Psoas muscle (tissue), 8 donors: ENCODE measurements at regions of chr19 and their contacts with region 1.

Region 1: GRCh38 chr19:2191456-2192310 is 27.9 kb downstream of the DOT1L start:
- DNase-seq: no peak
- ATAC-seq: no peak
- H3K4me3 ChIP-seq: no peak overlapping the region
- H3K27ac ChIP-seq: no peak overlapping the region
- H3K4me1 ChIP-seq: peaks cover 28% of the 10 kb centered on the region
- H3K27me3 ChIP-seq: no peaks in the 10 kb centered on the region
- CTCF ChIP-seq: no peak

Region 2: GRCh38 chr19:1935484-1936208 is 256.0 kb before region 1 on chr19:
- intact Hi-C with region 1: no loop called
- DNase-seq: peak; percentile 66 to 80
- ATAC-seq: peak; percentile 28 to 61 (median 36)
- H3K4me3 ChIP-seq: no peak overlapping the region
- H3K27ac ChIP-seq: peak overlapping the region; percentile 54
- H3K4me1 ChIP-seq: peaks cover 10% of the 10 kb centered on the region
- H3K27me3 ChIP-seq: no peaks in the 10 kb centered on the region
- CTCF ChIP-seq: no peak

Region 3: GRCh38 chr19:2123682-2124387 is 67.8 kb before region 1 on chr19:
- intact Hi-C with region 1: no loop called
- DNase-seq: peak in 1 of 2 donors; percentile 47
- ATAC-seq: no peak
- H3K4me3 ChIP-seq: no peak overlapping the region
- H3K27ac ChIP-seq: no peak overlapping the region
- H3K4me1 ChIP-seq: no peaks in the 10 kb centered on the region
- H3K27me3 ChIP-seq: no peaks in the 10 kb centered on the region
- CTCF ChIP-seq: no peak

Region 4: DNA sequence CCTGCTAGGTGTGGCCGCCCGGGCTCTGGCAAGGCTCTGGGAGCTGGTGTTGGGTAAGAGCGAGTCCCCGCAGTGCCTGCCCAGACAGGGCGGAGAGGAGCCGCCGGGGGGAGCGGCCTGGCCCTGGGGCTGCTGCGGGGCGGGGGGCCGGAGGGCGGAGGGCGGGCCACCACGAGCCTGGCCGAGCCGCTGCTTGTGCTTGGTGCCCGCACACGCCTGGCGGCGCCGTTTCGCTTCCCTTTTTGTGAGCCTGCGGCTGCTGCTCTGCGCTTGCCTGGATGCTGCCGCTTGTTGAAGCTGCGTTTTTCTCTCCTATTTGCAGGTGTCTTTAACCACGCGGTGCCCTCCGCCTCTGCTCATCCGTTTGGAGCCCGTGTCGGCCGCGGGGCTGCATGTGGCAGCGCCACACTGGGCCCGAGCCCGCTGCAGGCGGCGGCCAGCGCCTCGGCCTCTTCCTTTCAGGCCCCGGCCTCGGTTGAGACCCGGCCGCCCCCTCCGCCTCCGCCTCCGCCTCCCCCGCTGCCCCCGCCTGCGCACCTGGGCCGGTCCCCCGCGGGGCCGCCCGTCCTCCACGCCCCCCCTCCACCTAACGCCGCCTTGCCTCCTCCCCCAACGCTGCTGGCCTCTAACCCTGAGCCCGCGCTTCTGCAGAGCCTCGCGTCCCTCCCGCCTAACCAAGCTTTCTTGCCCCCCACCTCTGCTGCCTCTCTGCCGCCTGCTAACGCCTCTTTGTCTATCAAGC is 35.9 kb after region 1 on chr19:
- intact Hi-C with region 1: loop called in 1 of 2 experiments (anchors 5 kb)
- DNase-seq: no peak
- ATAC-seq: no peak
- H3K4me3 ChIP-seq: no peak overlapping the region
- H3K27ac ChIP-seq: no peak overlapping the region
- H3K4me1 ChIP-seq: peaks cover 18% of the 10 kb centered on the region
- H3K27me3 ChIP-seq: no peaks in the 10 kb centered on the region
- CTCF ChIP-seq: no peak

Region 5: DNA sequence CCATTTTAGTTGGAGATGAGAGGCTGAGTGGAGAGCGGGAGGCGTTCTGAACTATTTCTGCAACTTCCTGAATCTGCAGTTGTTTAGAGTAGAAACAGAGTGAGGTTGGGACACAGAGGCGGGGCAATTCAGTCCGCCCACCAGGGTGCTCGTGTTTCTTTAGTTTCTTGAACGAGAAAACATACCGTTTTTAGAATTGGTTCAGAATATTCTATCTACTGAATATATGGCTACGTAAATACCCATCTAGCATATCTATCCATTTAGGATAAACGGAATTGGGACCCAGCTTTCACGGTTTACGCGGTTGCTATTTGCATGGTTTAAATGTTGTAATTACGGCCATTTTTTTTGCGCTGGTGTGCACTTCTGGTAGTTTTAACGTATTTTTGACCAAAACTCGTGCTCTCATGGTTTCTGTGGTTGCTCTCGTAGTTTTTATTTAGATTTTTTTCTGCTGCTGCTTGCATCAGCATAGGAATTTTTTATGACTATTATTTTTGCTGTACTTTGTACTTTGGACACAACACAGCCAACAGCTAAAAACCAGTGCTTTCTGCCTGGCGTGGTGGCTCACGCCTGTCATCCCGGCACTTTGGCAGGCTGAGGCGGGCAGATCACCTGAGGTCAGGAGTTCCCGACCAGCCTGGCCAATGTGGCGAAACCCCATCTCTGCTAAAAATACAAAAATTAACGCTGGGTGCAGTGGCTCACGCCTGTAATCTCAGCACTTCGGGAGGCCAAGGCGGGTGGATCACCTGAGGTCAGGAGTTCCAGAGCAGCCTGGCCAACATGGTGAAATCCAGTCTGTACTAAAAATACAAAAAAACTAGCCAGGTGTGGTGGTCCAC is 203.0 kb after region 1 on chr19:
- intact Hi-C with region 1: no loop called
- DNase-seq: no peak
- ATAC-seq: peak in 1 of 4 donors; percentile 36
- H3K4me3 ChIP-seq: no peak overlapping the region
- H3K27ac ChIP-seq: no peak overlapping the region
- H3K4me1 ChIP-seq: no peaks in the 10 kb centered on the region
- H3K27me3 ChIP-seq: no peaks in the 10 kb centered on the region
- CTCF ChIP-seq: no peak